ENCODE measurements at regions of chr1 and their contacts with region 1.

Region 1: GRCh38 chr1:99808391-99809115 is 41.6 kb upstream of the AGL start:
- DNase-seq: no peak
- ATAC-seq: peak; percentile 95 to 97
- H3K4me3 ChIP-seq: peak overlapping the region; percentile 22
- H3K27ac ChIP-seq: no peak overlapping the region
- H3K4me1 ChIP-seq: no peaks in the 10 kb centered on the region
- H3K27me3 ChIP-seq: no peaks in the 10 kb centered on the region

Region 2: GRCh38 chr1:99919220-99919619 is 110.7 kb after region 1 on chr1:
- intact Hi-C with region 1: no loop called
- DNase-seq: no peak
- ATAC-seq: peak in 1 of 2 donors; percentile 61
- H3K4me3 ChIP-seq: no peak overlapping the region
- H3K27ac ChIP-seq: no peak overlapping the region
- H3K4me1 ChIP-seq: peaks cover 2% of the 10 kb centered on the region
- H3K27me3 ChIP-seq: no peaks in the 10 kb centered on the region

Region 3: GRCh38 chr1:100037927-100038659 is 229.5 kb after region 1 on chr1:
- intact Hi-C with region 1: loop called in 1 of 4 experiments (anchors 10 kb)
- DNase-seq: peak; percentile 91 to 97 (median 95)
- ATAC-seq: peak; percentile 100
- H3K4me3 ChIP-seq: peak overlapping the region; percentile 86
- H3K27ac ChIP-seq: peak overlapping the region; percentile 92
- H3K4me1 ChIP-seq: peaks cover 4% of the 10 kb centered on the region
- H3K27me3 ChIP-seq: no peaks in the 10 kb centered on the region

Measured in right cardiac atrium (tissue), 5 donors.